Activated B cell treated with CpG ODN at 0.5 μM for 24 hours (primary cell): ENCODE measurements at regions of chr7 and their contacts with region 1.

Region 1: GRCh38 chr7:139673230-139673629 is 104.6 kb downstream of the HIPK2 start:
- DNase-seq: no peak
- ATAC-seq: peak; percentile 95
- H3K4me3 Mint-ChIP-seq: peak overlapping the region; percentile 64
- H3K27ac Mint-ChIP-seq: peak overlapping the region; percentile 77
- H3K4me1 Mint-ChIP-seq: peaks cover 37% of the 10 kb centered on the region
- H3K27me3 Mint-ChIP-seq: no peaks in the 10 kb centered on the region
- CTCF ChIP-seq: no peak

Region 2: DNA sequence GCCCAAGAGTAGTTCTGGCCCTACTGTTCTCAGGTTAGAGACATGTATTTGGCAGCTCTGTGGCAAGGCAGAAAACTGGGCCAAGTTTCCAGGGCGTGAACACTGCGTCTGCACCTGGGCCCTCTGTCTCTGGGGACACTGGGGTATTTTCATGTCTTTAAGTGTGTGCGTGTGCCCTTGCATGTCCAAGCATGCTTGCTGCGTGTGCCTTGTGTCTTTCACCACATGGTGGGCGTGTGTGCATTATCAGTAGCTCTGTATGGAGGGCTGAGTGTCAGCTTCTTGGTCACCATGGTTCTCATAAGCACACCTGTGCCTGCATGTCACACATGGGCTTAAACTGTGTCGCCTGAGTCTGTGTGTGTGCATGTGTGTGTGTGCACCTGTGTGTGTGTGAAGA is 35.3 kb after region 1 on chr7:
- CTCF ChIA-PET with region 1: no interaction called
- POLR2A ChIA-PET with region 1: interaction called, 5 read pairs
- intact Hi-C with region 1: loop called (anchors 1 kb)
- DNase-seq: peak; percentile 28
- ATAC-seq: peak; percentile 92
- H3K4me3 Mint-ChIP-seq: no peak overlapping the region
- H3K27ac Mint-ChIP-seq: peak overlapping the region; percentile 24
- H3K4me1 Mint-ChIP-seq: peaks cover 42% of the 10 kb centered on the region
- H3K27me3 Mint-ChIP-seq: no peaks in the 10 kb centered on the region
- CTCF ChIP-seq: no peak

Region 3: GRCh38 chr7:140983802-140984201 is 1310.6 kb after region 1 on chr7:
- CTCF ChIA-PET with region 1: no interaction called
- POLR2A ChIA-PET with region 1: no interaction called
- intact Hi-C with region 1: no loop called
- DNase-seq: no peak
- ATAC-seq: no peak
- H3K4me3 Mint-ChIP-seq: no peak overlapping the region
- H3K27ac Mint-ChIP-seq: no peak overlapping the region
- H3K4me1 Mint-ChIP-seq: no peaks in the 10 kb centered on the region
- H3K27me3 Mint-ChIP-seq: peaks cover 24% of the 10 kb centered on the region
- CTCF ChIP-seq: no peak